ENCODE measurements at regions of chr10 and their contacts with region 1.

Region 1: GRCh38 chr10:124289851-124290795 is 128.6 kb downstream of the OAT start:
- DNase-seq: peak; percentile 80
- ATAC-seq: peak; percentile 76
- H3K4me3 ChIP-seq: no peak overlapping the region
- H3K27ac ChIP-seq: peak overlapping the region; percentile 68
- H3K4me1 ChIP-seq: peaks cover 55% of the 10 kb centered on the region
- H3K27me3 ChIP-seq: no peaks in the 10 kb centered on the region
- CTCF ChIP-seq: no peak
- EP300 ChIP-seq: peak; percentile 56 to 85
- POLR2A ChIP-seq: no peak
- RAD21 ChIP-seq: no peak

Region 2: GRCh38 chr10:124035928-124036558 is 254.1 kb before region 1 on chr10:
- CTCF ChIA-PET with region 1: no interaction called
- POLR2A ChIA-PET with region 1: no interaction called
- RAD21 ChIA-PET with region 1: interaction called, 10 read pairs
- SMC1A ChIA-PET with region 1: interaction called, 4 read pairs
- in situ Hi-C with region 1: no loop called
- intact Hi-C with region 1: no loop called
- DNase-seq: peak; percentile 82
- ATAC-seq: peak; percentile 99
- H3K4me3 ChIP-seq: peak overlapping the region; percentile 37; the same call in 1 of the 2 replicates
- H3K27ac ChIP-seq: no peak overlapping the region
- H3K4me1 ChIP-seq: peaks cover 16% of the 10 kb centered on the region
- H3K27me3 ChIP-seq: no peaks in the 10 kb centered on the region; a peak in 3 of 4 replicates
- CTCF ChIP-seq: no peak
- EP300 ChIP-seq: peak in 1 of 2 experiments; percentile 88; a peak in 3 of 4 replicates
- POLR2A ChIP-seq: peak; percentile 23; the same call in 1 of the 2 replicates
- RAD21 ChIP-seq: no peak

Region 3: DNA sequence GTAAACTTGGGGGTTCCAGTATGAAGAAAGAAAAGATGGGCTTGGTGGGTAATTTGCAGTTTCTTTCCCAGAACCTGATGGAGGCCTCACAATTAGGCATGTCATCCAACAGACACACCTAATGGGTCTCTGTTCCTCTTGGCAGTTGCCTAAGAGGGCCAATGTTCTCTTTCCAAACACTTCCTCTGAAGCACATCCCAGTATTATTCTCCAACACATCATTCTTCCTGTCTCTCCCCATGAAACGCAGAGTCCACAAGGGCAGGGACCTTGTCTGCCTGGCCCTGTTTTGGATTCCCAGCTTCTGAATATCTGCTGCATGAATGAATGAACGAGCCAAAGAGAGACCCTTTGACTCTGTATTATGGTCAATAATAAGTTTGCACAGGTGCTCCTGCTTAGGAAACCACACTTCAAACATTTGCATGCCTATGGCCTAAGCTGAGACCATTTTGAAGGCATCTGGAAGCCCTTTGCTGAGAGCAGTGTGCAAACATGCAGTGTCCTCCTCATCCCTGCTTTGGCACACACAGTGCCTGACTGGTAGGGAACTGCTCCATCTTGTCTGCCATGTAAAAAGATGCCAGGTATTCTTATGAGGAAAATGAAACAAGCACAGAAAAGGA is 95.8 kb before region 1 on chr10:
- CTCF ChIA-PET with region 1: interaction called, 4 read pairs
- POLR2A ChIA-PET with region 1: no interaction called
- RAD21 ChIA-PET with region 1: interaction called, 7 read pairs
- SMC1A ChIA-PET with region 1: interaction called, 11 read pairs
- in situ Hi-C with region 1: no loop called
- intact Hi-C with region 1: no loop called
- DNase-seq: peak; percentile 11
- ATAC-seq: no peak
- H3K4me3 ChIP-seq: no peak overlapping the region
- H3K27ac ChIP-seq: no peak overlapping the region
- H3K4me1 ChIP-seq: peaks cover 9% of the 10 kb centered on the region; the same call in 1 of the 2 replicates
- H3K27me3 ChIP-seq: no peaks in the 10 kb centered on the region
- CTCF ChIP-seq: no peak
- EP300 ChIP-seq: no peak
- POLR2A ChIP-seq: no peak
- RAD21 ChIP-seq: no peak

Region 4: DNA sequence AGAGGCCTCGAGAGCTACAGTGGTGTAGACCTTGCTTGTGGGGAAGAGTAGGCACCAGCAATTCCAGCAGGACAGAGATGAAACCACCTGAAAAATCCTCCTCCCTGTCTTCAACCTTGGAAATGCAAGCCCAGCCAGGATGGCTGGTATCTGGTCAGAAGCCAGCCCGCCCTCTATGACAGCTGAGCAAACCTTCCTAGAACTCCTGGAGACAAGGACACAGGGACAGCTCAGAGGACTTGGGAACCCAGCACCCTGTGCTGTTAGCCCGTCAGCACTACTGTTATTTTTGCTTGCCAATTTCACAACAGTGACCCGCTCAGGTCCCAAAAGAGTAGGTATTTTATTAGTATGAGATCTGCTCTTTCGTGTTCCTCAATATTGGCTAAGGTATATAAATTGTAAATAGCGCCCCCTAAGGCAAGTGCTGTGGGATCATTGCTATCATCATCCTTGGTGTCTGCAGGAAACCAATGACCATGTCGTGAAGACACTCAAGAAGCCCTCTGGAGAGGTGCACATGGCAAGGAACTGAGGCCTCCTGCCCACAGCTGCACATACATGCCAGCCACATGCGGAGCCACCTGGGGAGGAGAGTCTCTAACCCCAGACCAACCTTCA is 40.2 kb before region 1 on chr10:
- CTCF ChIA-PET with region 1: interaction called, 3 read pairs
- POLR2A ChIA-PET with region 1: interaction called, 4 read pairs
- RAD21 ChIA-PET with region 1: interaction called, 13 read pairs
- SMC1A ChIA-PET with region 1: interaction called, 23 read pairs
- in situ Hi-C with region 1: no loop called
- intact Hi-C with region 1: loop called (anchors 5 kb)
- DNase-seq: no peak
- ATAC-seq: no peak
- H3K4me3 ChIP-seq: no peak overlapping the region
- H3K27ac ChIP-seq: no peak overlapping the region
- H3K4me1 ChIP-seq: peaks cover 45% of the 10 kb centered on the region
- H3K27me3 ChIP-seq: no peaks in the 10 kb centered on the region; a peak in 1 of 4 replicates
- CTCF ChIP-seq: peak in 1 of 3 experiments; percentile 21; a peak in 2 of 6 replicates
- EP300 ChIP-seq: no peak
- POLR2A ChIP-seq: no peak
- RAD21 ChIP-seq: no peak

Region 5: DNA sequence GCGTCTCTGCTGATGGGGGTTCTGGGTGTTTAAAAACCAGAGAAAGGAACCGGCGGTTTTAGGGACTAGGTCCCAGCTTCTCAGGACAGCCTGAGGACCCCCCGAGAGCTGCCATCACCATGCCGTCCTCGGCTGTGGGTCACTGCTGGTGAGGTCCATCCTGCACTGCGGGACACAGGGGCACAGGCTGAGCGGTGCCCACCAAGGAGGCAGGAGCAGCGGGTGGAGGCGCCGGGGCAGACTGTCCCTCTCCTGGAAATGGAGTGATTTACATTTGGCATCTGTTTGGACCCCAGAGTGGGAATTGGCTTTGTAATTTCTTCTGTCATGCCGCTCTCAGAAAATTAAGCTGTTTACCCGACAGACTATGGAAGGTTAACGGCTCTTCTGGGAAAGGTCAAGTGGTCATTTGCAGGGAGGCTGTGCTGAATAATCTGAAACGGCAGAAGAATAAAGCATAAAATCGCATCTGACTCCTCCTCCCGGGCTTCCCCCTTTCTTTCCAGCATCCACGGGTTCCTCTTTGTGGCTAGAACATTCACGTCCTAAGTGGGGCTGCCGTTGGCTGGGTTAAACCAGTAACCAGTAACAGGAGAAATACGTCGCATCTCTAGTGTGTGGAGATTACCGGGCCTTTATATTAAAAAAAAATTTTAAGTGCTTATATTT is 203.2 kb after region 1 on chr10:
- CTCF ChIA-PET with region 1: no interaction called
- POLR2A ChIA-PET with region 1: no interaction called
- RAD21 ChIA-PET with region 1: no interaction called
- SMC1A ChIA-PET with region 1: no interaction called
- in situ Hi-C with region 1: no loop called
- intact Hi-C with region 1: no loop called
- DNase-seq: no peak
- ATAC-seq: no peak
- H3K4me3 ChIP-seq: no peak overlapping the region
- H3K27ac ChIP-seq: no peak overlapping the region
- H3K4me1 ChIP-seq: no peaks in the 10 kb centered on the region; the same call in 1 of the 2 replicates
- H3K27me3 ChIP-seq: no peaks in the 10 kb centered on the region
- CTCF ChIP-seq: no peak
- EP300 ChIP-seq: no peak
- POLR2A ChIP-seq: no peak
- RAD21 ChIP-seq: no peak

Region 6: GRCh38 chr10:124579011-124579399 is 288.9 kb after region 1 on chr10:
- CTCF ChIA-PET with region 1: no interaction called
- POLR2A ChIA-PET with region 1: no interaction called
- RAD21 ChIA-PET with region 1: no interaction called
- SMC1A ChIA-PET with region 1: no interaction called
- in situ Hi-C with region 1: no loop called
- intact Hi-C with region 1: no loop called
- DNase-seq: no peak
- ATAC-seq: no peak
- H3K4me3 ChIP-seq: no peak overlapping the region
- H3K27ac ChIP-seq: no peak overlapping the region
- H3K4me1 ChIP-seq: no peaks in the 10 kb centered on the region
- H3K27me3 ChIP-seq: no peaks in the 10 kb centered on the region; a peak in 1 of 4 replicates
- CTCF ChIP-seq: no peak
- EP300 ChIP-seq: no peak
- POLR2A ChIP-seq: no peak
- RAD21 ChIP-seq: no peak

Measured in GM12878 (cell line).